ENCODE measurements at regions of chrX and their contacts with region 1.

Region 1: GRCh38 chrX:55057675-55058249 is 17.1 kb upstream of the PAGE2B start:
- DNase-seq: peak; percentile 26
- H3K4me3 ChIP-seq: no peak overlapping the region
- H3K27ac ChIP-seq: no peak overlapping the region
- H3K4me1 ChIP-seq: no peaks in the 10 kb centered on the region
- H3K27me3 ChIP-seq: no peaks in the 10 kb centered on the region
- CTCF ChIP-seq: peak; percentile 87

Region 2: DNA sequence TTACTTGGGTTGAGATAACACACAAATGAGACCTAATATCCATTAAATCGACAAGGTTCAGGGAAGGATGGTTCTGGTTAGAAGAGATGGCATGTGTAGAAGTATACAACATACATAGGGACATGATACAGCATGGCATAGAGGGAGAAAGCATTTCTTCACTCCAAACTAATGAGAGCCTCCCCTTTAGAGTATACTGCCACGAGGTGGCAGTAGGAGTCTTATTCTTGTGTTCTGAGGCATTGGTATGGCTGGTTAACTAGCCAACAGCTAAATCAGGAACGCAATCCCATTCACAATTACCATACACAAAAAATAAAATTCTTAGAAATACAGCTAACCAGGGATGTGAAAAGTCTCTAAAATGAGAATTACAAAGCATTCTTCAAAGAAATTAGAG is 166.2 kb before region 1 on chrX:
- intact Hi-C with region 1: loop called (anchors 5 kb)
- DNase-seq: peak; percentile 31
- H3K4me3 ChIP-seq: no peak overlapping the region
- H3K27ac ChIP-seq: no peak overlapping the region
- H3K4me1 ChIP-seq: no peaks in the 10 kb centered on the region
- H3K27me3 ChIP-seq: no peaks in the 10 kb centered on the region
- CTCF ChIP-seq: no peak

Region 3: DNA sequence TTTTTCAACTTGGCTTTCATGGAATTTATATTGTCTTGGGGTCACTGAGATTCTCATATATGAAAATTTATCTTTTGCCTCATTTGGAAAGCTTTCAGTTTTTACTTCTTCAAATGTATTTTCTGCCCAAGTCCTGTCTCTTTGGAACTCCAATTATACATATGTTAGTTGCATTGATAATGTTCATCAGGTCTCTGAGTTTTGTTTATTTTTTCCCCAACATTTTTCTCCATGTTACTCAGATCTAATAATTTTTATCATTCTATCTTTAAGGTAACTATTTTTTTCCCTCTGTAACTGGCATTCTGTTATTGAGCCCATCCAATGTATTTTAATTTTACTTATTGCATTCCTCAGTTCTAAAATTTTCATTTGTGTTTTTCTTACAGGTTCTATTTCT is 147.8 kb before region 1 on chrX:
- intact Hi-C with region 1: no loop called
- DNase-seq: no peak
- H3K4me3 ChIP-seq: no peak overlapping the region
- H3K27ac ChIP-seq: no peak overlapping the region
- H3K4me1 ChIP-seq: no peaks in the 10 kb centered on the region
- H3K27me3 ChIP-seq: no peaks in the 10 kb centered on the region
- CTCF ChIP-seq: no peak

Region 4: GRCh38 chrX:54978451-54978850 is 79.3 kb before region 1 on chrX:
- intact Hi-C with region 1: no loop called
- DNase-seq: no peak
- H3K4me3 ChIP-seq: no peak overlapping the region
- H3K27ac ChIP-seq: no peak overlapping the region
- H3K4me1 ChIP-seq: no peaks in the 10 kb centered on the region
- H3K27me3 ChIP-seq: no peaks in the 10 kb centered on the region
- CTCF ChIP-seq: no peak

Region 5: GRCh38 chrX:55109306-55109705 is 51.5 kb after region 1 on chrX:
- intact Hi-C with region 1: no loop called
- DNase-seq: no peak
- H3K4me3 ChIP-seq: no peak overlapping the region
- H3K27ac ChIP-seq: no peak overlapping the region
- H3K4me1 ChIP-seq: no peaks in the 10 kb centered on the region
- H3K27me3 ChIP-seq: no peaks in the 10 kb centered on the region
- CTCF ChIP-seq: no peak

Region 6: GRCh38 chrX:55450259-55450658 is 392.5 kb after region 1 on chrX:
- intact Hi-C with region 1: no loop called
- DNase-seq: no peak
- H3K4me3 ChIP-seq: no peak overlapping the region
- H3K27ac ChIP-seq: no peak overlapping the region
- H3K4me1 ChIP-seq: no peaks in the 10 kb centered on the region
- H3K27me3 ChIP-seq: no peaks in the 10 kb centered on the region
- CTCF ChIP-seq: no peak